Activated T-helper 2 cell treated with anti-CD3 and anti-CD28 coated beads, Interferon-gamma antibody, Interleukin-2, Interleukin-4, amounts not matched to agents 10 μg/mL and 5 μg/mL and 100 μg/mL, durations not matched to agents 14 hours and 24 hours and 36 hours (primary cell): ENCODE measurements at regions of chr11 and their contacts with region 1.

Region 1: DNA sequence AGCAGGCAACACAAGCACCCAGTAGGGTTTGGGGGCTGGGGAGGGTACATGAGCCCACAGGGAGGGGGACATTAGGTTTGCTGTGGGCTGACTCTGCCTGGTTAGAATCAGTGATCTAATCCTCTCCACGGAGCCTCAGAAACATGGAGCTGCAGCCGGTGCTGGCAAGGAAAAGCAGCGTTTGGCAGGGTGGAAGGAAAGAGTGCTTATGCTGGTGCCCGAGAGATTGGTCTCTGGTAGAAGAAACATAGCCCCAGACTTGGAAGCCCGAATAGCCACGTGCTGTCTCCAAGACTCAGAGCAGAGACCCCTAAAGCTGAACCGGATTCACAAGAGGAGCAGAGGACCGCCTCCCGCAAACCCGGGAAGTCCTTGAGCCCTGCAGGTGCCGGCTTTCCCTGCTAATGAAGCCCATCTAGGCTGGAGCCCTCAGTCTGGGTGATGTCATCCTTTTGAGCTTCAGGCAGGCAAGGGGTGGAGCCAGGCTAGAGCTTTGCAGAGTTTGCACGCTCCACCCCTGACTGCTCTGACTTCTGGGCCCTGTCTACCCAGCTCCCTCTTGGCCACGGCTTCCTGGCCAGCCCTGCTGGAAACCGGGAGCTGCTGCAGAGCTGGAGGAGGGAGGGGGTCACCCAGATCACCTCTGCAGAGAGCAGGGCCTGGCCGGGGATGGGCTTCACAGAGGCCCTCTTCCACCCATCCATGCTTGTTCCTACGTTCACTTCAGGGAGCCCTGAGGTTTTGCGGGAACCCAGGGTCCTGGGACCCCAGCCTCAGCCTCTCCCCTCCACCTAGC is 35.0 kb upstream of the JAM3 start:
- DNase-seq: peak; percentile 67
- H3K4me3 Mint-ChIP-seq: no peak overlapping the region
- H3K27ac Mint-ChIP-seq: no peak overlapping the region
- H3K4me1 Mint-ChIP-seq: peaks cover 40% of the 10 kb centered on the region
- H3K27me3 Mint-ChIP-seq: peaks cover 18% of the 10 kb centered on the region

Region 2: DNA sequence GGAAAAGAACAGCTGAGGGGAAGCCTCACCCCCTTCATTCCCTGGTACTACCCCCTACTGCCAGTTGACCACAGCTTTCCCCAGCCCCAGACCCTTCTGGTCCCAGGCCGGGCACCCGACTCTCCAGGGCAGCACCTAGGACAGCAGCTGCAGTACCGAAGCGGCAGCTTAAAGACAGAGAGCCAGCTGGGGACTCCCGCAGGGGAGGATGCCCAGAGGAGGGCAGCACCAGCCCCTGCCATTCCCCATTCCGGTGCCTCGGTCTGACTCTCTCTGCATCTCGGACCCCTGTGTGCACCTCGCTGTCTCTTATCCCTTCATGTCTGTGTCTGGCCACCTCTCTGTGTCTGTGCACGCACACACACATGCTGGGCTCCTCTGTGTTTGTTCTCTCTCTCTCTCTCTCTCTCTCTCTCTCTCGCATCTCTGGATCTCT is 86.6 kb before region 1 on chr11:
- intact Hi-C with region 1: loop called (anchors 2 kb)
- DNase-seq: peak; percentile 67
- H3K4me3 Mint-ChIP-seq: peak overlapping the region; percentile 69
- H3K27ac Mint-ChIP-seq: peak overlapping the region; percentile 76
- H3K4me1 Mint-ChIP-seq: peaks cover 67% of the 10 kb centered on the region
- H3K27me3 Mint-ChIP-seq: no peaks in the 10 kb centered on the region

Region 3: DNA sequence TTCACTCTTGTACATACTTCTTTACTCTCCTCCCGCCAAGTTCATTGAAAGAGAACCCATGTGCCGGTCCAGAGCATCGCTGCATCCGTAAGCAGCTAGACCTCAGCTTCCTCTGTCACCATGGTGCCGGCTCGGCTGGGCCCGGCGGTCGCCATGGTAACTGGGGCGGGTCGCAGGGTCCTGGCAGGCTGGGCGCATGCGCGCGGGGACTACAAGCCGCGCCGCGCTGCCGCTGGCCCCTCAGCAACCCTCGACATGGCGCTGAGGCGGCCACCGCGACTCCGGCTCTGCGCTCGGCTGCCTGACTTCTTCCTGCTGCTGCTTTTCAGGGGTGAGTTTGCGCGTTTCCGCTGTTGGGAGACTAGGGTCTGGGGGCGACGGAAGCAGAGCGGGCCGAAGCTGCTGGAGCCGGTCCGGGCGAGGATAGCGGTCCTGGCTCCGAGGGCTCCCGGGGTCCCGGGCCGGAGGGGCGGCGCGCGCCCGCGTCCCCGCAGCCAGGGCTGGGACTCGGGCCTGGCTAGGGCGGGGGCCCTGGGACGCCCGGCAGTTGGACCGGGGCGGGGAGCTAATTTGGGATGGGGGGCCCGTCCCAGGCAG is 35.0 kb after region 1 on chr11 and contains the start of gene JAM3:
- intact Hi-C with region 1: loop called (anchors 2 kb)
- DNase-seq: peak; percentile 95
- H3K4me3 Mint-ChIP-seq: peak within 1 kb of the TSS; percentile 86
- H3K27ac Mint-ChIP-seq: no peak within 1 kb of the TSS
- H3K4me1 Mint-ChIP-seq: peaks cover 9% of the 10 kb centered on the region
- H3K27me3 Mint-ChIP-seq: peaks cover 63% of the 10 kb centered on the region
- total RNA-seq, gene JAM3: 2.4 and 3.4 TPM in 2 replicates